Activated CD4-positive, alpha-beta T cell treated with anti-CD3 and anti-CD28 coated beads for 36 hours (primary cell): ENCODE measurements at regions of chr16 and their contacts with region 1.

Region 1: DNA sequence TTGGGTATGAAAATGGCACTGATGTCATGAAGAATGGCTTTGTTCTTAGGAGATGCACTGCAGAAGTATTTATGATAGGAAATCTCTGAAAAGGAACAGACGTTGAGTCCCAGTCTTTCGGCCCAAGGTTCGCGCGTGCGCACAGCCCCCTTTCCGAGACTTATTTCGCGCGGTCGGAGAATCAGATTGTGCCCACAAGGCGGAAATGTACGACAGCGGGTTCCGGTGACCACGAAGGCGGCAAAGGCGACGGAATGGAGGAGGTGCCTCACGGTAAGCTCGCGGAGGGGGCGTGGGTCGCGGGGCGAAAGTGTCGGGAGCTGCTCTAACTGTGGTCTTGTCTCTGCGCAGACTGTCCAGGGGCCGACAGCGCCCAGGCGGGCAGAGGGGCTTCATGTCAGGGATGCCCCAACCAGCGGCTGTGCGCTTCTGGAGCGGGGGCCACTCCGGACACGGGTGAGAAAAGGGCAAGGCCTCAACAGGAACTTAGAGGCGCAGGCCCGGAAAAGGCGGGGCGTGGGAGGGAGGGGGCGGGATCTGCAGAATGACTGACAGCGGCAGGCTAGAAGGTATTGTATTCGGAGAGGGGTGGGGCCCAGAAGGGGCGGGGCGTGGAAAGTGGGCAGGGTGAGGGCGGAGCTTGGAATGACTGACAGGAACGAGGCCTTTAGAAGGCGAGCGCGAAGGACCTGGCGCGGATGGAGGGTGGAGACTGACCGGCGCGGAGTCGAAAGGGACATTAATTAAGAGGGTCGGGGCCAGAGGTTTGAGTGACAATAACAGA is at the start of gene NUBP1:
- DNase-seq: peak; percentile 100
- ATAC-seq: peak; percentile 95
- H3K4me3 Mint-ChIP-seq: peak within 1 kb of the TSS; percentile 75
- H3K27ac Mint-ChIP-seq: peak within 1 kb of the TSS; percentile 98
- H3K4me1 Mint-ChIP-seq: peaks cover 30% of the 10 kb centered on the region
- H3K27me3 Mint-ChIP-seq: no peaks in the 10 kb centered on the region
- total RNA-seq, gene NUBP1: 25.9 to 33.1 TPM

Region 2: DNA sequence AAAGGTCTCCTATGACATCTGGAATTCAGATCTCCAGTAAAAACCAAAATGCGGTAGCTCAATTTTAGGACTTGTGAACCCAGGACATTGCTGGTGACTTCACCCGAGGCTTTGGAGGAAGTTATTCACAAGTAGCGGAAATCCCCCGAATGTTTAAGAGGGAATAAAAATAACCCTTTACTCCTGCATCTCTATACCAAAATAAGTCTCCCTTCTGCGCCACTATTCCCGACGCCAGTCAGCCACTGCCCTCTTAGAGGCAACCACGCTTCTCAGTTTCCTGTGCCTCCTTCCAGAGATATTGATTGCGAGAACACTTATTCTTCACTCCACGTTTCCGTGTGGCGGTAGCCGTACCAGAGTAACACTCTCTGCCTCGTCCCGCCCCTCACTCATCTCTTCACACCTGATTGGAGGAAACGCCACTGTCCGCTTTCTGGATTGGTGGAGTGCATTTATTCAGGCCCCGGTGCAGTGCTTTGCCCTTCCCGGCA is 190.8 kb before region 1 on chr16:
- CTCF ChIA-PET with region 1: no interaction called
- POLR2A ChIA-PET with region 1: no interaction called
- intact Hi-C with region 1: loop called in 1 of 2 experiments (anchors 1 kb)
- DNase-seq: peak; percentile 77
- ATAC-seq: peak; percentile 98
- H3K4me3 Mint-ChIP-seq: peak overlapping the region; percentile 61
- H3K27ac Mint-ChIP-seq: peak overlapping the region; percentile 83
- H3K4me1 Mint-ChIP-seq: peaks cover 16% of the 10 kb centered on the region
- H3K27me3 Mint-ChIP-seq: peaks cover 16% of the 10 kb centered on the region

Region 3: GRCh38 chr16:10708969-10709368 is 34.8 kb before region 1 on chr16:
- CTCF ChIA-PET with region 1: no interaction called
- POLR2A ChIA-PET with region 1: no interaction called
- intact Hi-C with region 1: no loop called
- DNase-seq: no peak
- ATAC-seq: no peak
- H3K4me3 Mint-ChIP-seq: no peak overlapping the region
- H3K27ac Mint-ChIP-seq: no peak overlapping the region
- H3K4me1 Mint-ChIP-seq: no peaks in the 10 kb centered on the region
- H3K27me3 Mint-ChIP-seq: peaks cover 3% of the 10 kb centered on the region

Region 4: GRCh38 chr16:11032922-11033291 is 289.1 kb after region 1 on chr16:
- CTCF ChIA-PET with region 1: no interaction called
- POLR2A ChIA-PET with region 1: no interaction called
- intact Hi-C with region 1: no loop called
- DNase-seq: no peak
- ATAC-seq: no peak
- H3K4me3 Mint-ChIP-seq: no peak overlapping the region
- H3K27ac Mint-ChIP-seq: no peak overlapping the region
- H3K4me1 Mint-ChIP-seq: peaks cover 2% of the 10 kb centered on the region
- H3K27me3 Mint-ChIP-seq: no peaks in the 10 kb centered on the region